Endothelial cell of umbilical vein (primary cell): ENCODE measurements at regions of chr3 and their contacts with region 1.

Region 1: DNA sequence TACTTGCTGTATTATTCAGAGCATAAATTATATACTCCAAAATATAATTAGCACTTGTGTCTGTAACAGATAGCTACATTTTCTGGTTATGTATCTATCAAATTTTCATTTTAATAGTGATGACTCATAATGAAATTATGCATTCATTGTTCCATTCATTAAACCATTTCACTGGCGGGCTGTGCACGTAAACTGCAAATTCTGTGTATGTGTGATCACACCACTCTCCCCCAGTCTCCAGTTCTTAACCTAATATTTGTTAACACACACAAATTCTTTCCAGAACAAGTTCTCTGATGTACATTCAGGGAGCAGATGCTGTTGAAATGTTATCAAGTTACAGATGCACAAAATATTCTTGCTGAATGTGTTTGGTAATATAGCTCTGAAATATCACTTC is 3.8 kb upstream of the KCNMB2 start:
- DNase-seq: peak; percentile 68
- H3K4me3 ChIP-seq: no peak overlapping the region
- H3K27ac ChIP-seq: peak overlapping the region; percentile 53
- H3K4me1 ChIP-seq: peaks cover 25% of the 10 kb centered on the region
- H3K27me3 ChIP-seq: peaks cover 1 to 2% of the 10 kb centered on the region in 2 experiments
- CTCF ChIP-seq: no peak
- POLR2A ChIP-seq: no peak

Region 2: GRCh38 chr3:178513546-178514380 is 18.7 kb before region 1 on chr3:
- CTCF ChIA-PET with region 1: interaction called, 3 read pairs
- POLR2A ChIA-PET with region 1: interaction called, 3 read pairs
- dilution Hi-C with region 1: no loop called
- intact Hi-C with region 1: loop called (anchors 2 kb)
- DNase-seq: peak; percentile 62
- H3K4me3 ChIP-seq: no peak overlapping the region
- H3K27ac ChIP-seq: no peak overlapping the region
- H3K4me1 ChIP-seq: peaks cover 18% of the 10 kb centered on the region
- H3K27me3 ChIP-seq: no peaks in the 10 kb centered on the region
- CTCF ChIP-seq: no peak
- POLR2A ChIP-seq: no peak

Region 3: GRCh38 chr3:178960181-178960580 is 427.7 kb after region 1 on chr3:
- CTCF ChIA-PET with region 1: no interaction called
- POLR2A ChIA-PET with region 1: no interaction called
- dilution Hi-C with region 1: no loop called
- intact Hi-C with region 1: no loop called
- DNase-seq: no peak
- H3K4me3 ChIP-seq: no peak overlapping the region
- H3K27ac ChIP-seq: no peak overlapping the region
- H3K4me1 ChIP-seq: no peaks in the 10 kb centered on the region
- H3K27me3 ChIP-seq: no peaks in the 10 kb centered on the region
- CTCF ChIP-seq: no peak
- POLR2A ChIP-seq: no peak